Colonic mucosa (tissue), 4 donors: ENCODE measurements at regions of chr12 and their contacts with region 1.

Region 1: GRCh38 chr12:45990468-45991283 is at the start of gene SCAF11:
- DNase-seq: peak; percentile 100
- H3K4me3 ChIP-seq: peak within 1 kb of the TSS; percentile 82
- H3K27ac ChIP-seq: peak within 1 kb of the TSS; percentile 100
- H3K4me1 ChIP-seq: peaks cover 8% of the 10 kb centered on the region
- H3K27me3 ChIP-seq: no peaks in the 10 kb centered on the region
- CTCF ChIP-seq: peak; percentile 86
- total RNA-seq, gene SCAF11: 84.8 to 105 TPM

Region 2: GRCh38 chr12:45728630-45729232 is 261.9 kb before region 1 on chr12:
- intact Hi-C with region 1: loop called (anchors 2 kb)
- DNase-seq: peak; percentile 96
- H3K4me3 ChIP-seq: peak overlapping the region; percentile 78
- H3K27ac ChIP-seq: peak overlapping the region; percentile 99
- H3K4me1 ChIP-seq: peaks cover 14% of the 10 kb centered on the region
- H3K27me3 ChIP-seq: no peaks in the 10 kb centered on the region
- CTCF ChIP-seq: peak; percentile 95

Region 3: DNA sequence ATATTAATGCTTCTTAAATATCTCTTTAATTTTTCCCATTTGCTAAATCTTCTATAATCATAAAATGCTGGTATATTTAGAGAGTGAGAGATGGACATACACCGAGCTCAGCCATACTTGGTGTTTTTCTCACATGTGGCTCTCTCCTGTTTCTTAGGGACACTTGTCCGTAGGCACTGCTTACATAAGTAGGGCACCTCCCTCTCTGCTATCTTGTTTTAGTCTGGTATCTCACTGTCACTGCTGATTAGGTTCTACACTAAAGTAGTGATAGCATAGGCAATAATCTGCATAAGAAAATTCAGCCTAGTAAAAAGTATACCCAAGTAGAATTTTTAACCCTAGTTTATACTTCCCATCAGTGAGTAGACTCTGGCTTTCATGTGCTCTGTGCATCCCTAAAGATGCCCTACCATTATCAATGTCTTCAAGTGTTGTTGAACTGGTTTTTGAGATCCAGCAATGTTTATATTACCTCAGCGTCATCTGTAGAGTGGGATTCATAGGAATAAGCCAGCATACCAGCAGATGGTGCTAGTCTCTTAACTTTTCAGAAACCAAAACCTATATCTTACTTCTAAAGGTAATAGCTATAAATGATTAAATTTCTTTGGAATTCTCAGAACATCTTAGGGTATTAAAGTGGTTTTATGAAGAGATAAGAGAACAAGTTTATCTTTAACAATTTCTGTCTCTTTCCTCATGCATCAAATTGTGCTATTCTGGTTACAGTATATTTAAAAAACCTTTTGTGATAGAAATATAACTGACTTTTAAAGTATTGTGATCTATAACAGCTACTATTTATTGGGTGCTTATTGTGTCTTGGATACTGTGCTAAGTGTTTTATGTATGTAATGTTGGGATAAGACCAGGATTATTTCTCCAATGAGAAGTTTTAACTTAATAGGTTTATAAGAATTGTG is 228.2 kb before region 1 on chr12:
- intact Hi-C with region 1: loop called (anchors 5 kb)
- DNase-seq: no peak
- H3K4me3 ChIP-seq: no peak overlapping the region
- H3K27ac ChIP-seq: no peak overlapping the region
- H3K4me1 ChIP-seq: no peaks in the 10 kb centered on the region
- H3K27me3 ChIP-seq: no peaks in the 10 kb centered on the region
- CTCF ChIP-seq: peak; percentile 48

Region 4: GRCh38 chr12:45859915-45860314 is 130.8 kb before region 1 on chr12:
- intact Hi-C with region 1: no loop called
- DNase-seq: no peak
- H3K4me3 ChIP-seq: no peak overlapping the region
- H3K27ac ChIP-seq: no peak overlapping the region
- H3K4me1 ChIP-seq: no peaks in the 10 kb centered on the region
- H3K27me3 ChIP-seq: no peaks in the 10 kb centered on the region
- CTCF ChIP-seq: no peak

Region 5: DNA sequence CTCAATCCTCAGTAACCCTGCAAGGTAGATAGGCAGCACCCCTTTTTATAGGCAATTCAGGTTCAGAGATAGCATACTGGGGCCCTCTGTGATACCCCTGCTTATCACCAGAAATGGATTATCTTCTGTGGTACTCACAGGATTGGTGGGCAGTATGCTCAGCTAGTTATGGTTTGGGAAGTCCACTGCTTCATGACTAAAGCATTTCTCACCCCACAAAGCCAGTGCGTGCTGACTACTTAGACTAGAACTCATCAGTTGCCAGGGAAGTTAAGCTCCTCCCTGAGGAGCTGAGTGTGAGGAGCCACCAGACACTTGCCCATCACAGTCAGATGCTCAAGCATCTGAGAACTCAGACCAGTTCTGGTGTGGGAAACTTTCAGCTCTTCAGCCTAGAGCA is 76.6 kb before region 1 on chr12:
- intact Hi-C with region 1: no loop called
- DNase-seq: no peak
- H3K4me3 ChIP-seq: no peak overlapping the region
- H3K27ac ChIP-seq: no peak overlapping the region
- H3K4me1 ChIP-seq: no peaks in the 10 kb centered on the region
- H3K27me3 ChIP-seq: no peaks in the 10 kb centered on the region
- CTCF ChIP-seq: no peak